ENCODE measurements at regions of chr10 and their contacts with region 1.

Region 1: GRCh38 chr10:61750929-61751471 is 88.3 kb downstream of the CABCOCO1 start:
- DNase-seq: peak; percentile 76
- H3K4me3 Mint-ChIP-seq: no peak overlapping the region
- H3K27ac Mint-ChIP-seq: peak overlapping the region; percentile 80
- H3K4me1 Mint-ChIP-seq: peaks cover 31% of the 10 kb centered on the region
- H3K27me3 Mint-ChIP-seq: no peaks in the 10 kb centered on the region

Region 2: DNA sequence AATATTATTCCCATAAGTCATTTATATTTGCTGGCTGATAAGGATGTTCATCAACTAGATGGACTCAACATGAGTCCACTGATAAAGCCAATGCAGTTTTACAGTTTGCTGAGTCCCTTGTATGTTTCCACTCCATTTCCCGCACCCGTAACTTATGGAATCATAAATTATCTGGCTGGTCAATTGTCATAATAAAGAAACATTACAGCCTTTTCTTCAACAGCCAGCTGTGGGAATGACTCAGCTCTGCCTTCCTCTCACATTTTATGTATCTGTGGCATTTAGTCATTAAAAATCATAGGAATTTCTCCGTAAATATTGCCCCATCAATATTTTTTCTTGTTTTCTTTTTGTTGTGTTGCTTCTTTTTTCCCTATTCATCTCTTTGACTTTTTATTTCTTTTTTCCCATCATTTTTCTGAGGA is 275.5 kb before region 1 on chr10:
- CTCF ChIA-PET with region 1: no interaction called
- POLR2A ChIA-PET with region 1: no interaction called
- DNase-seq: no peak
- H3K4me3 Mint-ChIP-seq: no peak overlapping the region
- H3K27ac Mint-ChIP-seq: no peak overlapping the region
- H3K4me1 Mint-ChIP-seq: no peaks in the 10 kb centered on the region
- H3K27me3 Mint-ChIP-seq: no peaks in the 10 kb centered on the region

Region 3: GRCh38 chr10:61682323-61682722 is 68.7 kb before region 1 on chr10:
- CTCF ChIA-PET with region 1: no interaction called
- POLR2A ChIA-PET with region 1: no interaction called
- DNase-seq: no peak
- H3K4me3 Mint-ChIP-seq: no peak overlapping the region
- H3K27ac Mint-ChIP-seq: no peak overlapping the region
- H3K4me1 Mint-ChIP-seq: no peaks in the 10 kb centered on the region
- H3K27me3 Mint-ChIP-seq: peaks cover 5% of the 10 kb centered on the region

Region 4: GRCh38 chr10:61765176-61766087 is 14.4 kb after region 1 on chr10:
- CTCF ChIA-PET with region 1: interaction called, 10 read pairs
- POLR2A ChIA-PET with region 1: interaction called, 6 read pairs
- DNase-seq: no peak
- H3K4me3 Mint-ChIP-seq: no peak overlapping the region
- H3K27ac Mint-ChIP-seq: peak overlapping the region; percentile 70
- H3K4me1 Mint-ChIP-seq: peaks cover 22% of the 10 kb centered on the region
- H3K27me3 Mint-ChIP-seq: no peaks in the 10 kb centered on the region

Region 5: DNA sequence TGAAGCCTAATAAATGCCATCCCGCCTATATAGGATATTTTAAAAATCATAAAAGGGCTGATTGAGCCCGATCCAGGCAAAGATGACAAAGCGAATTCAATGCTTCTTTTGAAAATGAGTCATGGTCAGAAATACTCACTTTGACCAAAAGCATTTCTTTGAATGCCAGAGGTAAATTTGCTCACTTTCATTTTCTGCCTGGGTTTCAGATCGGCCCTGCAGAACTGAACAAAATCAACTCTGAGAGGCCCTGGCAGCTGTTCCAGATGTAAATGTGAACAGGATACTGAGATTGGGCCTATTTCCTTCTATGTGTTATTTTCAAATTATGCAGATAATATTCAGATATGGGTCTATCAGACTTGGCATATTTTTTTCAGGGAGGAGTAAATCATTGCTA is 35.7 kb after region 1 on chr10:
- CTCF ChIA-PET with region 1: interaction called, 12 read pairs
- POLR2A ChIA-PET with region 1: interaction called, 8 read pairs
- DNase-seq: peak; percentile 31
- H3K4me3 Mint-ChIP-seq: no peak overlapping the region
- H3K27ac Mint-ChIP-seq: peak overlapping the region; percentile 85
- H3K4me1 Mint-ChIP-seq: peaks cover 64% of the 10 kb centered on the region
- H3K27me3 Mint-ChIP-seq: no peaks in the 10 kb centered on the region

Region 6: DNA sequence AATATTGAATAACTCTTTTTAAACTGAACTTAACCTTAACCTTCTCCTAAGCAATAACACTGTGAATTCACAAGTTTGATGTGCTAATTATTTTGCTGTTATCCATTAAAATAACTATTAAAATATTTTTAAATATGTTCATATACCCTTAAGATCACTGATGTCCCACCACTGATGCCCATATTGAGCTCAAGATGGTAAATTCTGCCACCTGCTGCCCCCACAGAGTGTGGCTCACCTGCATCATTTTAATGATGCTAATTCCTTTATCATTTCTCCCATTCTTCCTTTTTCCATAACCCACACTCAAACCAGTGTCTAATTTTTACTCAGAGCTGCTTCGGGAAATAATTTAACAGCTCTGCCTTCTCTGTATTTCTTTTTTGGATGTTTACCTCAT is 68.2 kb after region 1 on chr10:
- CTCF ChIA-PET with region 1: interaction called, 15 read pairs
- POLR2A ChIA-PET with region 1: no interaction called
- DNase-seq: no peak
- H3K4me3 Mint-ChIP-seq: no peak overlapping the region
- H3K27ac Mint-ChIP-seq: no peak overlapping the region
- H3K4me1 Mint-ChIP-seq: peaks cover 14% of the 10 kb centered on the region
- H3K27me3 Mint-ChIP-seq: no peaks in the 10 kb centered on the region

Region 7: GRCh38 chr10:61835069-61835945 is 84.3 kb after region 1 on chr10:
- CTCF ChIA-PET with region 1: interaction called, 75 read pairs
- POLR2A ChIA-PET with region 1: interaction called, 6 read pairs
- DNase-seq: no peak
- H3K4me3 Mint-ChIP-seq: no peak overlapping the region
- H3K27ac Mint-ChIP-seq: peak overlapping the region; percentile 80
- H3K4me1 Mint-ChIP-seq: peaks cover 25% of the 10 kb centered on the region
- H3K27me3 Mint-ChIP-seq: no peaks in the 10 kb centered on the region

Region 8: DNA sequence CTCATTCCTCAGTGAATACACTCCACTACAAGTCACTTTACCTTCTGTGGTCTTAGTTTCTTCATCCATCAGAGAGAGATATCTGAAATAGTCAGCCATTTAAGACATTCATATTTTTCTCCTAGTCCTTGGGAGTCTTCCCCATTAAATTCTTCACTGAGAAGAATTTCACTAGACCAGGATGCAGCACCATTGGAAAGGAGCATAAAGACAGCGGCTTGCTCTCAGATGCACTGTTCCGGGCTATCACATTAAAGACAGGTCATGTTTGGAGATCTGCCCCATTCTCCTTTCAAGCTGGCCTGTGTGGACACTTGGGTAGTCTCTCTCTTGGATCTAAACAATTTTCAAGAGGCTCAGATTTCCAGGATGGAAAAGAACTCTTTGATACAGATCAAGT is 118.3 kb after region 1 on chr10:
- CTCF ChIA-PET with region 1: interaction called, 30 read pairs
- POLR2A ChIA-PET with region 1: interaction called, 4 read pairs
- DNase-seq: no peak
- H3K4me3 Mint-ChIP-seq: no peak overlapping the region
- H3K27ac Mint-ChIP-seq: no peak overlapping the region
- H3K4me1 Mint-ChIP-seq: peaks cover 13% of the 10 kb centered on the region
- H3K27me3 Mint-ChIP-seq: peaks cover 5% of the 10 kb centered on the region

Region 9: DNA sequence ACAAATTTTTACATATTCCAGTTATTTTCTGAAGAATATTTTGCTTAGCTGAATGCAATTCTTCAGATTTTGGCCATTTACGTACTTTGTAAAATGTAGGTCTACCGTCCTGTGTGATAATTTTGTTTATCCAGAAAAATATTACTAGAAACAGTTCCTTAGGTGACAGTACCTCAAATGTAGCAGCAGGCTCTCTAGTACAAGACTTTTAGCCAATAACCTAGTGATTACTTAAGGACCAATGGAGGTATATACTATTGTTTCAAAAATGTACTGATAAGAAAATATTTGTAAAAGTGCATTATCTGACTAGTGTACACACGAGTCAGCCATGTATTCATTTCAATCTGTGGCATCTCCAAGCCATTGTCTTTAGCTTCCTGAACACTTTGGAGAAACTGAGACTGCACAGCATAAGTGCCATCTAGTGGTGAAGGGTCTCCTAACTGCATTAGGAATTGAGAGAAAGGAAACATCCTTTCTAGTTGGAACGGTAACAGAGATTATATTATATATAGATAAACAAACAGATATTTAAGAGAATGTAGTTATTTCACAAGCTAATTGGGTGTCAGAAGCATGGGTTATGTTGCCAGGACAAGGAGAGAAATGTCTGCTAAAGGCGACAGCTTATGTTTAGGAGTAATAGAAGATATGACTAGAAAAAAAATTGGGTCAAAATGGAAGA is 493.9 kb after region 1 on chr10:
- CTCF ChIA-PET with region 1: interaction called, 16 read pairs
- POLR2A ChIA-PET with region 1: interaction called, 4 read pairs
- DNase-seq: peak; percentile 59
- H3K4me3 Mint-ChIP-seq: peak overlapping the region; percentile 52
- H3K27ac Mint-ChIP-seq: peak overlapping the region; percentile 65
- H3K4me1 Mint-ChIP-seq: peaks cover 38% of the 10 kb centered on the region
- H3K27me3 Mint-ChIP-seq: no peaks in the 10 kb centered on the region